ENCODE measurements at regions of chr20 and their contacts with region 1.

Region 1: DNA sequence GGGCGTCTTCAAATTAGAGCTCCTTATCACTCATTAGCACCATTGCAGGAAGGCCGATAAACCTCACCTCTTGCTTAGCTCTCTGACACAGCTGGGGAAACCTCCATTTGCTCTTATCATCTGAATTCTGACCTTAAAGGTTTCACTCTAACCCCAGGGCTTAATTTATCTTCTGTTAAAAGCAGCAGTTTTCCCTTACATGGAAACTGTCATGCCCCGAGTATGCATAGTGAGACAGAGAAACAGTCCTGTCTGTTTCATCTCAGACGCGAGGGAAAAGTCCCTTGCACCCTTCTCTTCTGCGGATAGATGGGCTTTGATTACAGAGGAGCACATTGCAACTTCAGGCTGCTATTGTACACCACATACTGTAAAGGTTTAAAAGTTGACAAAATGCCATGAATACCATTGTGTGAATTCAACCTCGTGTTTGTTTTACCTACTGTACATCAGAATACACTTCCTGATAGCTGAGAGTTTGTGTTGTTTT is 191.5 kb upstream of the BMP2 start:
- DNase-seq: peak; percentile 53
- ATAC-seq: peak; percentile 90
- H3K4me3 ChIP-seq: no peak overlapping the region
- H3K27ac ChIP-seq: no peak overlapping the region
- H3K4me1 ChIP-seq: no peaks in the 10 kb centered on the region
- H3K27me3 ChIP-seq: no peaks in the 10 kb centered on the region
- CTCF ChIP-seq: no peak
- EP300 ChIP-seq: peak; percentile 81 to 83; a peak in 3 of 4 replicates
- POLR2A ChIP-seq: no peak
- RAD21 ChIP-seq: no peak

Region 2: DNA sequence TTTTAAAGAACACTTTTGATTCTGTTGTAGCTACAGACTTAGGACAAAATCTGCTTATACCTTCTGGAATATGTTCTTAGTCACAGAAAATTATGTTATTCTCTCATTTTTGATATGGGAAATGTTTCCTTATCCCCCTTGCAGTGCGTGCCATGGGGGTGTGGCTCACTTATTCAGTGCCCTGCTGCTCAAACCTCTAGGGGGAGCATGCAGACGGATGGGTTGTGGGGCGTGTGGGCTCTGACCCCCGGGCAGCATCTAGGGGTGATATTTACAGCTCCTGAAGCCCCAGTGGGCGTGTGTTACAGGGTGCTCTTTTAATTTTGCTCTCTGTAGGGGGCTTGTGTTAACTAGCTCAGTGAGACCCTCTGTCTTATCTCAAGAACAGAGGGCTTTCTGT is 391.9 kb before region 1 on chr20:
- CTCF ChIA-PET with region 1: interaction called, 3 read pairs
- POLR2A ChIA-PET with region 1: no interaction called
- RAD21 ChIA-PET with region 1: no interaction called
- SMC1A ChIA-PET with region 1: interaction called, 3 read pairs
- in situ Hi-C with region 1: no loop called
- intact Hi-C with region 1: loop called (anchors 10 kb)
- DNase-seq: no peak
- ATAC-seq: 0 out of 3 replicates have a peak, but pooled peaks have one; percentile 36
- H3K4me3 ChIP-seq: no peak overlapping the region
- H3K27ac ChIP-seq: no peak overlapping the region
- H3K4me1 ChIP-seq: no peaks in the 10 kb centered on the region
- H3K27me3 ChIP-seq: peaks cover 0 to 1% of the 10 kb centered on the region in 2 experiments; a peak in 2 of 4 replicates
- CTCF ChIP-seq: peak in 2 of 3 experiments; percentile 16 to 23; a peak in 2 of 6 replicates
- EP300 ChIP-seq: no peak
- POLR2A ChIP-seq: no peak
- RAD21 ChIP-seq: no peak

Region 3: DNA sequence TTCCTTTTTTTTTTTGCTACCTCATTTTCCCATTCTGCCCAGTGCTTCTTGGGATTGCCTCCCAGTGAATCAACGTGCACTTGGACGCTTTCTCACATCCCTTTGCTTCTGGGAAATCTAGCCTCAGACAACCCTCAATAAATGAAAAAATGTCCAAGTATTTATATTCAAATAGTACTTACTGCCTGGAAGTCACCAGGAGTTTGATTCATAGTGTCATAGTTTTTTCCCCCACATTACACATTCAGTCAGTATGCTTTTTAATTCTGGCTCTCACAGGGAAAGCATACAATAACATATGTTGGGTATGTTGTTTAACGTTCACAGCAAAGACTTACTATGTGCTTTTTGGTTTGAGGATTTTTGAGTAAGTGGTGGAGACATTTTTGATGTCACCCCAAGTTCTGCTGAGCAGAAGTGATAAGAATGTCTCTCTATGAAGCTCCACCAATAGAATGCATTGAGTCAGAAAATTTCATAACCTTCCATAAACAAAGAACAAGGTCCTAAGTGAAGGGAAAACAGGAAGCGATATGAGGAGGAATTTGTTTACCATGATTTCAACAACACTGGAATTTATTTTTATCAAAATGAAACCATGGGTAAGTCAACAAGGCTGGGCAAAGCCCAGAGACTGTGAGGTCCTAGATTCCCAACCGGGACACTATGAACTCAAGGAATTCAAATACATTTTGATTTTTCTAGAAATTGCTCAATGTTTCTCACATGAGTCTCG is 109.7 kb before region 1 on chr20:
- CTCF ChIA-PET with region 1: no interaction called
- POLR2A ChIA-PET with region 1: no interaction called
- RAD21 ChIA-PET with region 1: no interaction called
- SMC1A ChIA-PET with region 1: no interaction called
- in situ Hi-C with region 1: no loop called
- intact Hi-C with region 1: no loop called
- DNase-seq: no peak
- ATAC-seq: no peak
- H3K4me3 ChIP-seq: no peak overlapping the region
- H3K27ac ChIP-seq: no peak overlapping the region
- H3K4me1 ChIP-seq: no peaks in the 10 kb centered on the region
- H3K27me3 ChIP-seq: no peaks in the 10 kb centered on the region
- CTCF ChIP-seq: no peak
- EP300 ChIP-seq: no peak
- POLR2A ChIP-seq: no peak
- RAD21 ChIP-seq: no peak

Region 4: GRCh38 chr20:6644813-6645628 is 69.1 kb after region 1 on chr20:
- CTCF ChIA-PET with region 1: no interaction called
- POLR2A ChIA-PET with region 1: no interaction called
- RAD21 ChIA-PET with region 1: no interaction called
- SMC1A ChIA-PET with region 1: no interaction called
- in situ Hi-C with region 1: no loop called
- intact Hi-C with region 1: no loop called
- DNase-seq: no peak
- ATAC-seq: peak; percentile 86
- H3K4me3 ChIP-seq: no peak overlapping the region
- H3K27ac ChIP-seq: no peak overlapping the region
- H3K4me1 ChIP-seq: no peaks in the 10 kb centered on the region
- H3K27me3 ChIP-seq: no peaks in the 10 kb centered on the region
- CTCF ChIP-seq: no peak
- EP300 ChIP-seq: peak; percentile 21 to 81; a peak in 3 of 4 replicates
- POLR2A ChIP-seq: no peak
- RAD21 ChIP-seq: no peak

Region 5: DNA sequence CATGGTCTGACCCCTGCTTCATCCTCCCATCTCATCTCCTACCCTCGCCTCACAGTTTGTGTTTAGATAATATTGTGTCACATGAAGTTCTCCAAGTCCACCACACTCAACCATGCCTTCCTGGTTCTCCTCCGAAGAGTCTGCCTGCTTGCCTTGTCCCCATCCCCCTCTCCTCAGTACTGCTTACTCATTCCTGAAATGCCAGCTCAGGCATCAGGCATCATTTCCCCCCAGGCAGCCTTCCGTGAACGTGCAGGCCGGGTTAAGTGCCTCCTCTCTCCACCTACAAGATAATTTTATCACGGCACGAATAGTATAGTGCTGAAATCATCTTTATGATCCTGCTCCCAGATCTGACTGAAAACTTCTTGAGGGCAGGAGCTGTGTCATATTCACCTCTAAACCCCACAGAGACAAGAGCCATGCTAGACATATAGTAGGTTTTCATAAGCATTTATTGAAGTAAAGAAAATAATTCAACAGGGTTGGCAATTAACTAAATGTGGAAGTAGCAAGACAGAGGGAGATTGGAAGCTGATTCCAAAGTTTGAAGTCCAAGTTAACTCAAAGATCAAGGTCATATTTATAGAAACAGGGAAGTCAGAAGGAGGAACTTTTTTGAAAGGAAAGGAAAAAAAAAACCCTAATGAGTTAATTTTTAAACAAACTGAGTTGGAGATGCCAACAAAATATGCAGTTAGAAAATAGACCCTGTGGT is 142.9 kb after region 1 on chr20:
- CTCF ChIA-PET with region 1: no interaction called
- POLR2A ChIA-PET with region 1: no interaction called
- RAD21 ChIA-PET with region 1: no interaction called
- SMC1A ChIA-PET with region 1: no interaction called
- in situ Hi-C with region 1: no loop called
- intact Hi-C with region 1: no loop called
- DNase-seq: no peak
- ATAC-seq: peak; percentile 63
- H3K4me3 ChIP-seq: no peak overlapping the region
- H3K27ac ChIP-seq: no peak overlapping the region
- H3K4me1 ChIP-seq: no peaks in the 10 kb centered on the region
- H3K27me3 ChIP-seq: no peaks in the 10 kb centered on the region
- CTCF ChIP-seq: no peak
- EP300 ChIP-seq: no peak
- POLR2A ChIP-seq: no peak
- RAD21 ChIP-seq: no peak